Dendritic cell treated with granulocyte-macrophage colony-stimulating factor and Interleukin-4, amounts not matched to agents 40 ng/mL and 50 ng/mL, for 4 days (primary cell): ENCODE measurements at regions of chr7 and their contacts with region 1.

Region 1: DNA sequence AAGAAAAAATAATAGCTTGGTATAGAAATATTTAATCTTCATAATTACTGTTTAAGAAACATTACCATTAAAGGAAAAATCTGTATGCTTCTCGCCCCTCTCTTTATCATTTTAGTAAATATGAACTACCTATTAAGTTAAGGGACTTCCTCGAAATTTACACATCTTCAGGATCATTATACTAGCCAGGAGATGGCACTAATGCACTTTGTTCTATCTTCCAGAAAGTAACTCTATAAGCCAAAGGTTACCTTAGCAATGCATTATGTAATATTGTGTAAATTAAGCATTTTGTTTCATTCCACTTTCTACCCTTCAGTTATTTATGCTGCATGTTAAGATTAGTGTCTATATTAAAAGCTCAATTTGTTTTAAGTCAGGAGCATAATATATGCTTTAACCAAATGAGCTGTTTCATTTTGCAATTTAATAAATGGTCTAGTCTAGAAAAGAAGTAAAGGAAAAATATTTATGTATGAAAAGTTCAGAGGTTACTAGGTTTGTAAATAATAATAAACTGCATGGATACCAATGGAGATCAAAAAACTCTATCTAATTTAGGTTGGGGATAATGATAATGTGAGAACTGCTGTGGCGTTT is 128.4 kb downstream of the ANKRD7 start:
- H3K4me3 Mint-ChIP-seq: no peak overlapping the region
- H3K27ac Mint-ChIP-seq: no peak overlapping the region
- H3K4me1 Mint-ChIP-seq: no peaks in the 10 kb centered on the region
- H3K27me3 Mint-ChIP-seq: peaks cover 19% of the 10 kb centered on the region

Region 2: GRCh38 chr7:118602090-118602489 is 249.1 kb after region 1 on chr7:
- intact Hi-C with region 1: no loop called
- H3K4me3 Mint-ChIP-seq: no peak overlapping the region
- H3K27ac Mint-ChIP-seq: no peak overlapping the region
- H3K4me1 Mint-ChIP-seq: no peaks in the 10 kb centered on the region
- H3K27me3 Mint-ChIP-seq: no peaks in the 10 kb centered on the region

Region 3: DNA sequence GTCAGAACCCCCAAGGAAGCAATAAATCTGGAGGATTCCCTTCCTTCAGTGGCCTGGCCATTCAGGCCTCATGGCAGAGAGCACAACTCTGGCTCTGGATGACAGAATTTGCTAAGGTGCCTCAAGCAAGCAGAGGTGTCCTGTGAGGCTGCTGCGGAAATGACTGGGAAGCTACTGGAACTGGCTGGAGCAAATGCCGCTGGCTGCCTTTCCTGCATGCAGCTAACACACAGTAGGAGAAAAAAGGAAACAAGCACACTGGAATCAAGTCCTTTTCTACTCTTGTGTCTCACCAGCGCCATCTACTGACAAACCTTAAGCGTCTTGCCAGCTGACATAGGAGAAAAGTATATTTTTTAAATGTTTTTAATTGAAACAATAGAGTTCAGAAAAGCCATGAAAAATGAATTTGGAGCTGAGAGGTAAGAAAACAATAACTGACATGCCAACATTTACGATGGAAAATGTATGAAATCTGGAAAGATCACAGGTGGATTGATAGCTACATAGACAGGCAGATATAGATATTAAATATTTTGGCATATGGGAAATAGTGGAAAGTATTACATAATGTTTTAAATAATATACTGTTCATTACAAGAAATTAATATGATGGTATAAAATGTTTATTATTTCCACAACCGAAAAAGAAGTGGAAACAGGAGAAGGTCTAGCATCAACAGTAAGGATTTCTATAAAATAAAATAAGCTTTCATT is 823.1 kb after region 1 on chr7:
- intact Hi-C with region 1: loop called (anchors 5 kb)
- H3K4me3 Mint-ChIP-seq: no peak overlapping the region
- H3K27ac Mint-ChIP-seq: no peak overlapping the region
- H3K4me1 Mint-ChIP-seq: no peaks in the 10 kb centered on the region
- H3K27me3 Mint-ChIP-seq: no peaks in the 10 kb centered on the region